ENCODE measurements at regions of chr1 and their contacts with region 1.

Region 1: DNA sequence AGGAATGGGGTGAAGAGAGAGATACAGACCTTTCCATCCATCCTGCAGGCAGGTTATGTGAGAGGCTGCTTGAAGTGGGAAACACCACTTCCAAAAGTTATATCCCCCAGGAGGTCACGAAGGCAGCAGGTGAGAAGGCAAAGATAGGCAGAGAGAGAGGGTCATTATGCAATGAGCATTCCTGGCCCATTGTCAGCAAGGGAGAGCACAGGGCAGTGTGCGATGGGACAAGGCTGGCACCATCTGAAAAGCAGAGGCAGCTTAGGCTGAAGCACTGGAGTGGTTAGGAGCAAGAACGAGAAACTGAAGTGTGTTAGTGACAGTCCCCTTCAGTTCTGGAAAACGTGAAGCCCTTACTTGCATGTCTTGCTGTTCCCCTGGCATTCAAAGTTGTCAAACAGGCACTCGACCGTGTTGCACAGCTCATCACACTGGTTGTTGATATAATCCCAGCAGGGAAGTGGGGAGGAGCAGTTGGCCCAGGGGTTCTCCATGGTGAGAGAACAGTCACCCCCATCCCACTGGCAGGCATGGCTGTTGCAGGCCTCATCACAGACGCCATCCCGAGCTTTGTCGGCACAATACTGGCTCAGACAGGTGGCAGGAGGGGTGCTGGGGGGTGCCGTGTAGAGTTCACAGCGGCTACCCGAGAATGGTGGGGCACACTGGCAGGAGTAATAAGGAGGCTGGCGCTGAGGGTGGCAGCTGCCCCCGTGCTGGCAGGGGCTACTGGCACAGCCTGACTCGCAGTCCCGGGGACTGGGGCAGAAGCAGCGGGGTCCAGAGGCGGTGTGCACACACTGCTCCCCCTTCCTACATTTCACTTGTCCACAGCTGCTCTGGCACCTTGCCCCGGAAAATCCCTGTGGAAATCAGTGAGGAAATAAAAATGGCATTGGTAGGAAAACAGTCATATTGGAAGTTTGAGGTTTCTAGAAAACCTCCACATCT is 28.9 kb upstream of the ADAM30 start:
- DNase-seq: no peak
- ATAC-seq: no peak
- H3K4me3 ChIP-seq: no peak overlapping the region
- H3K27ac ChIP-seq: no peak overlapping the region
- H3K4me1 ChIP-seq: peaks cover 0 to 5% of the 10 kb centered on the region in 2 experiments; a peak in 2 of 5 replicates
- H3K27me3 ChIP-seq: peaks cover 12 to 38% of the 10 kb centered on the region in 2 experiments
- CTCF ChIP-seq: no peak
- EP300 ChIP-seq: no peak
- POLR2A ChIP-seq: no peak
- RAD21 ChIP-seq: no peak

Region 2: DNA sequence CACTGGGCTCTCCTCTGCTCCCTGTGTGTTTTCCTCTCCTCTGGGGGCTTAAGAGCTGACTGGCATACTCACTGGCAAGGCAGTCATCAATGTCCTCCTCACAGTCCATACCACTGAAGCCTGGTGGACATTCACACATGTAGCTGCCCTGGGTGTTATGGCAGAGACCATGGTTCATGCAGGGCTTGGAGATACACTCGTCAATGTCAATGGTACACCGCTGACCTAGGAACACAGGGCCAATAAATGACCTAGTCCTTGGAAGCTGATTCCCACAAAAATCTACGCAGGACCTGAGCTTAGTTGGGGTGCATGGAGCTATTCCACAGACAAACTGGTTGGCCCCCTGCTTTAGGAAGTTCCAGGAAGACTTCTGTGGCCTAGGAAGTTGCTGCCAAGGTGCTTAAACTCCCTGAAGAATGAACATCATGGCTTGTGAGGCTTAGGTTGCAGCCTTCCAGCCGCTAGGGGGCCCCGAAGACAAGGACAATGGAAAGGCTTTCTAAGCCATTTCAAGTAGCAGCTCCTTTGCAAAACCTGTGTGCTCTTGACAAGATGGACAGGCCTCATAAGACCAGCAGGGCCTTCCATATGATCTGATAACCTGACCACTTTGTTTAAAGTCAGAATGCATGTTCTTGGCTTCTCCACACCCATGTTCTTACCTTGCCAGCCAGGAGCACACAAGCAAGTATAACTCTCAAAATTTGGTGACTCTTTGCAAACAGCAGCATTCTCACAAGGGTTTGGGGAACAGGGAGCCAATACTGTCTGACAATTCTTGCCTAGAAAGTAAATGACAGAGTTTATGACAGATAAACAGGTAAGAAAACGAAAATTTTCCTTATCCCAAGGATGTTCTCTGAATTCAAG is 23.4 kb after region 1 on chr1:
- CTCF ChIA-PET with region 1: no interaction called
- POLR2A ChIA-PET with region 1: no interaction called
- in situ Hi-C with region 1: no loop called
- intact Hi-C with region 1: loop called (anchors 2 kb)
- DNase-seq: peak; percentile 51 to 81 (median 58)
- ATAC-seq: peak; percentile 99
- H3K4me3 ChIP-seq: no peak overlapping the region
- H3K27ac ChIP-seq: no peak overlapping the region
- H3K4me1 ChIP-seq: no peaks in the 10 kb centered on the region
- H3K27me3 ChIP-seq: no peaks in the 10 kb centered on the region
- CTCF ChIP-seq: peak; percentile 83 to 95 (median 94)
- EP300 ChIP-seq: no peak
- POLR2A ChIP-seq: no peak
- RAD21 ChIP-seq: peak; percentile 74 to 91

Region 3: GRCh38 chr1:119978018-119978505 is 52.8 kb after region 1 on chr1:
- CTCF ChIA-PET with region 1: no interaction called
- POLR2A ChIA-PET with region 1: no interaction called
- in situ Hi-C with region 1: no loop called
- intact Hi-C with region 1: loop called (anchors 10 kb)
- DNase-seq: no peak
- ATAC-seq: no peak
- H3K4me3 ChIP-seq: no peak overlapping the region
- H3K27ac ChIP-seq: no peak overlapping the region
- H3K4me1 ChIP-seq: no peaks in the 10 kb centered on the region
- H3K27me3 ChIP-seq: peaks cover 3 to 7% of the 10 kb centered on the region in 2 experiments; a peak in 4 of 5 replicates
- CTCF ChIP-seq: no peak
- EP300 ChIP-seq: no peak
- POLR2A ChIP-seq: no peak
- RAD21 ChIP-seq: no peak

Measured in K562 (cell line).